Activated CD4-positive, alpha-beta T cell treated with anti-CD3 and anti-CD28 coated beads, Interleukin-2, amount 10 ng/mL, durations not matched to agents 24 days and 14 days (primary cell): ENCODE measurements at regions of chr2 and their contacts with region 1.

Region 1: DNA sequence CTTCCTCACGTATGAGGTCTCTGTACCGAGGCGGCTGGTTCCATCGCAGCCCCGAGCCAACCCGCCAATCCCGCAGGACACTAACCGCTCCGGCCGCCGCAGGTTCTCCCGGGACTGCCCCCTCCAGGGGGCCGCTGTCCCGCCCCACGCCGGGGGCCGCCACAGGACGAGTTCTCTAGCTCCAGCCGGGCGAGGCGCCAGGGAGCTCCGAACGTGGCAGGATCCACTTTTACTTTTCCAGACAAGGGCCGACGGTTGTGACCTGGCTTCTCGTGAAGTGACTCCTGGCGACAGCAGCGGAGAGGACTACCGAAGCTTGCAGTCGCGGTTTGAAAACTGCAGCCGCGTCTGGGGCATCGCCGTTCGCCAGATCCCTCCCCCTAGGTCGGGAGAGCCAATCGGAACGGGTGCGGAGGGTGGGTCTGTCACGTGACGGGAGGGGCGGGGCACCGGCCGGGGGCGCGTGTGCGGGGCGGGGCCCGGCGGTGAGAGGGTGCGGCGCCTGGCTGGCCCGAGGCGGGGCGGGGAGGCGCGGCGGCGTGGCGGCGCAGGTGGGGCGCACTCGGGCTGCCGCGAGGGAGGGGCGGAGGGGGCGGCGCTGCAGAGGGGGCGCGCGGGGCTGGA is at the start of gene STK17B:
- DNase-seq: peak; percentile 98
- H3K4me3 Mint-ChIP-seq: peak within 1 kb of the TSS; percentile 93
- H3K27ac Mint-ChIP-seq: peak within 1 kb of the TSS; percentile 99
- H3K4me1 Mint-ChIP-seq: peaks cover 40% of the 10 kb centered on the region
- H3K27me3 Mint-ChIP-seq: no peaks in the 10 kb centered on the region
- total RNA-seq, gene STK17B: 129 and 131 TPM in 2 replicates

Region 2: GRCh38 chr2:196101325-196101991 is 69.9 kb before region 1 on chr2:
- intact Hi-C with region 1: no loop called
- DNase-seq: no peak
- H3K4me3 Mint-ChIP-seq: no peak overlapping the region
- H3K27ac Mint-ChIP-seq: peak overlapping the region; percentile 55
- H3K4me1 Mint-ChIP-seq: peaks cover 17% of the 10 kb centered on the region
- H3K27me3 Mint-ChIP-seq: no peaks in the 10 kb centered on the region

Region 3: DNA sequence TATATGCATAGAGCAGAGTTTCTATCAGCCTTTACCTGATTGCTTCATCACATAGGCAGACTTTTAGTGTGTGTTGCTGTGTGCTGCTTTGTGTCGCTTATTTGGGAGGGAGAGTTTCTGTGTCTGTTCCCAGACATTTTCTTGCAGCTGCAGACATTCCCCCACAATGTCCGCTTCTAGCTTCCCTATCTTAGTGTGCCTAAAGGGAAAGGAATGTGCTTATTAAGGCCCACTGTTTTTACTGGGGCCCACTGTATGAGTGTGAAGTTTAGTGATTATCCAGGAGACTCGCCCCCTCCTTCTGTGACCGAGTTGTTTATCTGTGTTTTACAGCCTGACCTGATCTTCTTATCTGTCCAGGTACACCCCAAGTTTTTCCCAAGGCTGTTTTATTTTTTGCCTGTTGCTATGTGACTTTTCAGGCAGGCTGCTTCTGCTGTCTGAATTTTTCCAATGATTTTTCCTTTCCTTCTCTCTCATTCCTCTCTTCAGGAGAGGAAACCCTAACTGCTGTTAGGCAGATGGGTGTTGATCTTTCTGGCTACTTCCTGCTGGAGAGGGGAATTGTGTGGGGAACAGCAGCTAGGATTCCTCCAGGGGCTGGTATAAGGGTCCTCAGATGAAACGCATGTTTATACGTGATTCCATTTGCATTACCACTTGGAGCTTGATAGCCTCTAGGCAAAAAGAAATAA is 47.5 kb before region 1 on chr2:
- intact Hi-C with region 1: no loop called
- DNase-seq: no peak
- H3K4me3 Mint-ChIP-seq: no peak overlapping the region
- H3K27ac Mint-ChIP-seq: no peak overlapping the region
- H3K4me1 Mint-ChIP-seq: no peaks in the 10 kb centered on the region
- H3K27me3 Mint-ChIP-seq: peaks cover 2% of the 10 kb centered on the region

Region 4: GRCh38 chr2:196143730-196144131 is 27.6 kb before region 1 on chr2:
- intact Hi-C with region 1: loop called (anchors 5 kb)
- DNase-seq: no peak
- H3K4me3 Mint-ChIP-seq: peak overlapping the region; percentile 31
- H3K27ac Mint-ChIP-seq: peak overlapping the region; percentile 88
- H3K4me1 Mint-ChIP-seq: peaks cover 45% of the 10 kb centered on the region
- H3K27me3 Mint-ChIP-seq: no peaks in the 10 kb centered on the region

Region 5: GRCh38 chr2:196205881-196206435 is 34.6 kb after region 1 on chr2:
- intact Hi-C with region 1: loop called (anchors 1 kb)
- DNase-seq: no peak
- H3K4me3 Mint-ChIP-seq: no peak overlapping the region
- H3K27ac Mint-ChIP-seq: no peak overlapping the region
- H3K4me1 Mint-ChIP-seq: peaks cover 36% of the 10 kb centered on the region
- H3K27me3 Mint-ChIP-seq: no peaks in the 10 kb centered on the region

Region 6: GRCh38 chr2:196233021-196233804 is 61.9 kb after region 1 on chr2:
- intact Hi-C with region 1: loop called (anchors 1 kb)
- DNase-seq: no peak
- H3K4me3 Mint-ChIP-seq: no peak overlapping the region
- H3K27ac Mint-ChIP-seq: peak overlapping the region; percentile 72
- H3K4me1 Mint-ChIP-seq: peaks cover 79% of the 10 kb centered on the region
- H3K27me3 Mint-ChIP-seq: no peaks in the 10 kb centered on the region

Region 7: GRCh38 chr2:196263181-196263747 is 91.9 kb after region 1 on chr2:
- intact Hi-C with region 1: loop called (anchors 1 kb)
- DNase-seq: peak; percentile 89
- H3K4me3 Mint-ChIP-seq: peak overlapping the region; percentile 72
- H3K27ac Mint-ChIP-seq: peak overlapping the region; percentile 93
- H3K4me1 Mint-ChIP-seq: peaks cover 58% of the 10 kb centered on the region
- H3K27me3 Mint-ChIP-seq: no peaks in the 10 kb centered on the region

Region 8: DNA sequence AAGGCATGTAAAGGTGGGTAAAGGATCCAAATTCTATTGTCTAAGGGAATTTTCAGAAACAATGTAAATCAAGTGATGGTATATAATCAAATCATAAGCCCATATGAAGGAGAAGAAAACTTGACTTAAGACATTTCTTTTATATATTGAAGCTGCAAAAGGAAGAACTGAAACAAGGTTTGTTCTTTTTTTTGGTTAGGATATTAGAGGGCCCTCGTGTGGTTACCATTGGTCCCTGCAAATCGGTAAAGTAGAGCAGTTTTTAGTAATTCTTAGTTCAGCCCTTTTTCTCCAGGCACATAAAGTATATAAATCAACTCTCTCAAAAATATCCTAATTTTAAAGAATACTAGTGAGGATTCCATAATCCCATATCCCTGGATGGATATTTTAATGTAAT is 105.6 kb after region 1 on chr2:
- intact Hi-C with region 1: loop called (anchors 2 kb)
- DNase-seq: peak; percentile 80
- H3K4me3 Mint-ChIP-seq: no peak overlapping the region
- H3K27ac Mint-ChIP-seq: no peak overlapping the region
- H3K4me1 Mint-ChIP-seq: peaks cover 48% of the 10 kb centered on the region
- H3K27me3 Mint-ChIP-seq: no peaks in the 10 kb centered on the region

Region 9: GRCh38 chr2:196528486-196529223 is 357.3 kb after region 1 on chr2:
- intact Hi-C with region 1: no loop called
- DNase-seq: peak; percentile 54
- H3K4me3 Mint-ChIP-seq: no peak overlapping the region
- H3K27ac Mint-ChIP-seq: no peak overlapping the region
- H3K4me1 Mint-ChIP-seq: peaks cover 15% of the 10 kb centered on the region
- H3K27me3 Mint-ChIP-seq: no peaks in the 10 kb centered on the region

Region 10: DNA sequence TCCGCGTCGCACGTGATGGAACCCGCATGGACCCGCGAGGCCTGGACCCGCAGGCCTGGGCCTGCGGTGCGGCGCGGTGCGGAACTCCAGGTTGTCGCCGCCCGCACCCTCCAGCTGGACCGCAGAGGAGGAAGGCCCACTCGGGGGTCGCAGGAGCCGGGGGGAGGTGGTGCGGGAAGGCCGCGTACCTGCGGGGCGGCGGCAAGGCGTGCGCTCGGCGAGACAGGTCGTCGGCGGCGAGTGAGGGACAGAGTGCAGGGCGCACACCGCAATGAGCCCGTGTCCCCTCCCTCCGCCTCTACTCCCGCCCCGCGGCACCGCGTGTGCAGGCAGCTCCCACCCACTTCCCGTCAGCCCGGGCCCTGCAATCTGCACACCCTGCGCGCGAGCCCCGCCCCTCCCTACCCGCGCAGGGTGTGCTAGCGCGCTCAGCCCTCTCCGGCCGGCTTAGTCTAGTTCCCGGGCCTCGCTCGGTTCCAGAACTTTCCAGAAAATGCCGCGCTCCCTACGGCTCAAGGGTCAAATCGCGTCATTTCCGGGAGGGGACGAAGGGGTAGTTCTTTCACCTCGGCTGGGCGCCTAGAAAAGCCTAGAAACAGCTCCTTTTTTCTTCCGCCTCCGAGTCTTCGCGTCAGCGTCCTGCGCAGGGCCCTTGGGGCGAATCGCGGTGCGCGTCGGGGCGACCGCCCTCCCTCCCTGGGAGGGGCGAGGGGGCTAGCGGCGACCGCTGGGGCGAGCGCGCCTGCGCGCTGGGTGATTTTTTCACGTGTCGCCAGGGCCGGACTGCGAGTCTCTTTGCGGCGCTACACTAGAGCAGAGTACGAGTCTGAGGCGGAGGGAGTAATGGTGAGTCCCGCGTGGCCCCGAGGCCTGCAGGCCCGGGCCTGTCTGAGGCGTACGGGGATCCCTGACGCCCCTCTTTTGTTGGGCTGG is 1328.5 kb after region 1 on chr2 and contains the starts of genes HSPD1 and HSPE1:
- intact Hi-C with region 1: loop called (anchors 10 kb)
- DNase-seq: peak; percentile 99
- H3K4me3 Mint-ChIP-seq: peak within 1 kb of the TSS; percentile 95
- H3K27ac Mint-ChIP-seq: peak within 1 kb of the TSS; percentile 98
- H3K4me1 Mint-ChIP-seq: peaks cover 41% of the 10 kb centered on the region
- H3K27me3 Mint-ChIP-seq: no peaks in the 10 kb centered on the region
- total RNA-seq, gene HSPD1: 984 and 999 TPM in 2 replicates
- total RNA-seq, gene HSPE1: 409 and 411 TPM in 2 replicates